HCT116 (cell line): ENCODE measurements at regions of chr15 and their contacts with region 1.

Region 1: DNA sequence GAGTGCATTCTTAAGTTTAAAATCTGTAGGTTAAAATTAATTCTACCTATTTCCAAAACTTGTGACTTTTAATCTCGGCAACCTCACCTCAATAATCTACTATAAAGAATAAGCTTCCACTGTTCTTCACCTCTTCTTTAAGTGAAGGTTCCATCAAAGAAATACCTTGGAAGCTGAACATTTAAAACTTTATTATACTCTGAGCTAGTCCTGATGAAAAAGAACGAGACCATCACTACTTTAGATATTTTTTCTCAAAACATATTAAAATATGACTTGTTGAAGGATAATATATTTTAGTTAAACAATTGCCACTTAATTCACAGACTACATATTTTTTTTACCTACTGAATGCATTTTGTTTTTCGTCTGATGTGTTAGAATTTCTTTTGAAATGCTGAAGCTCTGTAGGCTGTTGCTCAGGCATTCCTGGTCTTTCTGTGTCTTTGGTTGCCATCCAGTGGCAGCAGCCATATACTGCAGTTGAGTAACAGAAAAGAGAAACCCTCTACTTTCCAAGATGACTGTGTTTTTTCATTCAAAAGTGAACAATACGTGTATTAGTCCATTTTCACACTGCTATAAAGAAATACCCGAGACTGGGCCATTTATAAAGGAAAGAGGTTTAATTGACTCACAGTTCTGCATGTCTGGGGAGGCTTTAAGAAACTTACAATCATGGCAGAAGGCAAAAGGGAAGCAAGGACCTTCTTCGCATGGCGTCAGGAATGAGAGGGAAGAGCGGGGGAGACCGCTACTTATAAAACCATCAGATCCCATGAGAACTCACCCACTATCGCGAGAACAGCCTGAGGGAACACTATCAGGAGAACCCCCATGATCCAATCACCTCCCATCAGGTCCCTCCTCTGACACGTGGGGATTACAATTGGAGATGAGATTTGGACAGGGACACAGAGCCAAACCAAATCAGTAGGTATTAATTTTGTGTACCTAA is 4.5 kb upstream of the GOLGA8B start:
- DNase-seq: peak; percentile 77
- ATAC-seq: peak; percentile 66
- H3K4me3 ChIP-seq: peak overlapping the region; percentile 27 to 41
- H3K27ac ChIP-seq: peak overlapping the region; percentile 20; the same call in 1 of the 2 replicates
- H3K4me1 ChIP-seq: peaks cover 6 to 18% of the 10 kb centered on the region in 2 experiments; a peak in 3 of 4 replicates
- H3K27me3 ChIP-seq: no peaks in the 10 kb centered on the region
- CTCF ChIP-seq: peak; percentile 67 to 82 (median 75); a peak in 5 of 6 replicates
- POLR2A ChIP-seq: peak; percentile 96
- RAD21 ChIP-seq: peak; percentile 80

Region 2: GRCh38 chr15:34056936-34057335 is 531.1 kb before region 1 on chr15:
- CTCF ChIA-PET with region 1: interaction called, 3 read pairs
- POLR2A ChIA-PET with region 1: no interaction called
- RAD21 ChIA-PET with region 1: no interaction called
- intact Hi-C with region 1: loop called (anchors 1 kb)
- DNase-seq: no peak
- ATAC-seq: no peak
- H3K4me3 ChIP-seq: no peak overlapping the region
- H3K27ac ChIP-seq: no peak overlapping the region
- H3K4me1 ChIP-seq: no peaks in the 10 kb centered on the region
- H3K27me3 ChIP-seq: no peaks in the 10 kb centered on the region
- CTCF ChIP-seq: no peak
- POLR2A ChIP-seq: no peak
- RAD21 ChIP-seq: no peak

Region 3: GRCh38 chr15:34109797-34110663 is 478.0 kb before region 1 on chr15:
- CTCF ChIA-PET with region 1: interaction called, 9 read pairs
- POLR2A ChIA-PET with region 1: interaction called, 3 read pairs
- RAD21 ChIA-PET with region 1: no interaction called
- intact Hi-C with region 1: loop called (anchors 1 kb)
- DNase-seq: peak; percentile 29
- ATAC-seq: peak; percentile 72; the same call in 1 of the 2 replicates
- H3K4me3 ChIP-seq: no peak overlapping the region
- H3K27ac ChIP-seq: no peak overlapping the region
- H3K4me1 ChIP-seq: peaks cover 0 to 3% of the 10 kb centered on the region in 2 experiments; a peak in 1 of 4 replicates
- H3K27me3 ChIP-seq: no peaks in the 10 kb centered on the region
- CTCF ChIP-seq: peak; percentile 74 to 88 (median 78)
- POLR2A ChIP-seq: no peak
- RAD21 ChIP-seq: peak; percentile 82

Region 4: GRCh38 chr15:34342737-34343575 is 245.0 kb before region 1 on chr15 and contains the starts of genes NOP10 and NUTM1:
- CTCF ChIA-PET with region 1: interaction called, 4 read pairs
- POLR2A ChIA-PET with region 1: no interaction called
- RAD21 ChIA-PET with region 1: no interaction called
- intact Hi-C with region 1: loop called (anchors 1 kb)
- DNase-seq: peak; percentile 90
- ATAC-seq: peak; percentile 82
- H3K4me3 ChIP-seq: peak within 1 kb of the TSS; percentile 79 to 96
- H3K27ac ChIP-seq: peak within 1 kb of the TSS; percentile 72
- H3K4me1 ChIP-seq: peaks cover 7 to 25% of the 10 kb centered on the region in 2 experiments; a peak in 3 of 4 replicates
- H3K27me3 ChIP-seq: no peaks in the 10 kb centered on the region
- CTCF ChIP-seq: peak; percentile 80 to 90 (median 80)
- POLR2A ChIP-seq: peak; percentile 96
- RAD21 ChIP-seq: peak; percentile 80
- total RNA-seq, gene NOP10: 216 TPM
- total RNA-seq, gene NUTM1: 0.07 TPM